Caco-2 (cell line): ENCODE measurements at regions of chr5 and their contacts with region 1.

Region 1: DNA sequence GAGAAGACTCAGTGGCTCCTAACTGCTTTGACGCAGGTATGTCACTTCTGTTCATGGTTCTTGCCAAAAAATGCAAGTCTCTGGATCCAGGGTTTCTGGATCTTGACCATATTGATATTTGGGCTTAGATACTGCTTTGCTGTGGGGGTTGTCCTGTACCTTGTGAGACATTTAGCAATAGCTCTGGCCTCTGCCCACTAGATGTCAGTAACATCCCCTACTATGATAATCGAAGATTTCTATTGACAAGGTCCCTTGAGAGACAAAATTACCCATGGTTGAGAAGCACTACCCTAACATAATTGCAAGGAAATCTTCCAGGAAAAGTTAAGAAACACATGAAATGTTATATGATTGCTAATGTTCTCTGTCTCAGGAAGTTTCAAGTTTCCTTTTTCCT is 285.4 kb downstream of the TMEM232 start:
- DNase-seq: peak in 1 of 2 experiments; percentile 34
- H3K4me3 ChIP-seq: no peak overlapping the region
- H3K4me3 Mint-ChIP-seq: no peak overlapping the region
- H3K27ac Mint-ChIP-seq: no peak overlapping the region
- H3K4me1 ChIP-seq: peaks cover 10% of the 10 kb centered on the region; the same call in 1 of the 2 replicates
- H3K4me1 Mint-ChIP-seq: no peaks in the 10 kb centered on the region
- H3K27me3 ChIP-seq: no peaks in the 10 kb centered on the region
- H3K27me3 Mint-ChIP-seq: no peaks in the 10 kb centered on the region
- CTCF ChIP-seq: peak; percentile 54 to 65

Region 2: GRCh38 chr5:110590187-110590586 is 149.2 kb after region 1 on chr5:
- CTCF ChIA-PET with region 1: interaction called, 4 read pairs
- POLR2A ChIA-PET with region 1: no interaction called
- intact Hi-C with region 1: loop called (anchors 1 kb)
- DNase-seq: peak in 1 of 2 experiments; percentile 17
- H3K4me3 ChIP-seq: no peak overlapping the region
- H3K4me3 Mint-ChIP-seq: no peak overlapping the region
- H3K27ac Mint-ChIP-seq: no peak overlapping the region
- H3K4me1 ChIP-seq: peaks cover 13% of the 10 kb centered on the region
- H3K4me1 Mint-ChIP-seq: peaks cover 10% of the 10 kb centered on the region
- H3K27me3 ChIP-seq: no peaks in the 10 kb centered on the region; the same call in 1 of the 2 replicates
- H3K27me3 Mint-ChIP-seq: no peaks in the 10 kb centered on the region
- CTCF ChIP-seq: peak; percentile 50 to 63

Region 3: GRCh38 chr5:110625376-110625999 is 184.5 kb after region 1 on chr5:
- CTCF ChIA-PET with region 1: interaction called, 5 read pairs
- POLR2A ChIA-PET with region 1: no interaction called
- intact Hi-C with region 1: loop called (anchors 1 kb)
- DNase-seq: no peak
- H3K4me3 ChIP-seq: no peak overlapping the region
- H3K4me3 Mint-ChIP-seq: no peak overlapping the region
- H3K27ac Mint-ChIP-seq: no peak overlapping the region
- H3K4me1 ChIP-seq: no peaks in the 10 kb centered on the region
- H3K4me1 Mint-ChIP-seq: no peaks in the 10 kb centered on the region
- H3K27me3 ChIP-seq: no peaks in the 10 kb centered on the region
- H3K27me3 Mint-ChIP-seq: peaks cover 5% of the 10 kb centered on the region
- CTCF ChIP-seq: peak in 1 of 2 experiments; percentile 46